CD4-positive, alpha-beta T cell (primary cell): ENCODE measurements at regions of chr14 and their contacts with region 1.

Region 1: DNA sequence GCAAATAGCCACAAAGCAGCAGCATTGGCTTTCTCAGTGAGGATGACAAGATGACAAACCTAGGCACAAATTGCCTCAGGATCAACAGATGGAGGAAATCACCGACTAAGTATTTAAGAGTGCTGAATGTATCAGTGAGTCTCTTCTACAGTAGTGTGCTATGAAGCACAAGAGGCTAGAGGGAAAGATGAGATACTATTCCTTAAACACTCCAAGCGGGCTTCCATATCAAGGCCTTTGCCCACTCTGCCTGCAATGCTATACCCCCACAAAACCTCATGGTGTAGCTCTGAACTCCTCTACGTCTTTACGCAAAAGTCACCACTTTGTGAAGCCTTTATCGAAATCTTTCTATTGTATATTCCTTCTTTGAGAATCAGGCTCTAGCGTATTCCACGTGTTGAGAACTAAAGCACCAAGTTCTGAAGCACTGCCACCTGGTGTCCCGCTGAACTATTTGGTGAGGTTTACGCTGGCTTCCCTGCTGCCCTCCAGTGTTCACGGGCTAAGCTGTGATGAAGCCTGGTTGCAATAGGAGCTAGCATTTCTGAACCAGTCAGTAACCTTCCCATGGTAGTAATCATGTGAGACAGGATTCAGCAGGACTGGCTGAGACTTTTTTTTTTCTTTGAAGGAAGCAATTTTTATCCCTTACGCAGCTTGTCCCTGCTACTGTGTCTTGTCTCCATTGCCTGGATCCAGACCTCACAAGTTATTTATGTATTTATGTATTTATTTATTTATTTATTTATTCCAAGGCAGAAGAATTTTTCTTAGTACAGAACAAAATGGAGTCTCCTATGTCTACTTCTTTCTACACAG is 426.5 kb upstream of the OR4E1 start:
- DNase-seq: peak; percentile 28 to 83 (median 55)
- ATAC-seq: peak; percentile 74
- H3K4me3 ChIP-seq: no peak overlapping the region
- H3K4me3 Mint-ChIP-seq: peak overlapping the region; percentile 54
- H3K27ac ChIP-seq: no peak overlapping the region
- H3K27ac Mint-ChIP-seq: peak overlapping the region; percentile 67
- H3K4me1 ChIP-seq: peaks cover 24% of the 10 kb centered on the region
- H3K4me1 Mint-ChIP-seq: peaks cover 53% of the 10 kb centered on the region
- H3K27me3 ChIP-seq: no peaks in the 10 kb centered on the region
- H3K27me3 Mint-ChIP-seq: no peaks in the 10 kb centered on the region
- CTCF ChIP-seq: peak; percentile 61

Region 2: GRCh38 chr14:21987937-21988336 is 112.2 kb before region 1 on chr14:
- CTCF ChIA-PET with region 1: no interaction called
- POLR2A ChIA-PET with region 1: no interaction called
- intact Hi-C with region 1: no loop called
- DNase-seq: peak in 3 of 14 experiments; percentile 49 to 62 (median 54)
- ATAC-seq: no peak
- H3K4me3 ChIP-seq: no peak overlapping the region
- H3K4me3 Mint-ChIP-seq: peak overlapping the region; percentile 3
- H3K27ac ChIP-seq: no peak overlapping the region
- H3K27ac Mint-ChIP-seq: peak overlapping the region; percentile 75
- H3K4me1 ChIP-seq: peaks cover 6% of the 10 kb centered on the region
- H3K4me1 Mint-ChIP-seq: peaks cover 12% of the 10 kb centered on the region
- H3K27me3 ChIP-seq: no peaks in the 10 kb centered on the region
- H3K27me3 Mint-ChIP-seq: no peaks in the 10 kb centered on the region
- CTCF ChIP-seq: peak; percentile 50

Region 3: GRCh38 chr14:22039938-22040775 is 60.0 kb before region 1 on chr14:
- CTCF ChIA-PET with region 1: interaction called, 13 read pairs
- POLR2A ChIA-PET with region 1: no interaction called
- intact Hi-C with region 1: loop called in 1 of 2 experiments (anchors 2 kb)
- DNase-seq: peak in 13 of 14 experiments; percentile 2 to 71 (median 38)
- ATAC-seq: peak; percentile 95
- H3K4me3 ChIP-seq: peak overlapping the region; percentile 38
- H3K4me3 Mint-ChIP-seq: peak overlapping the region; percentile 86
- H3K27ac ChIP-seq: peak overlapping the region in 1 of 2 donors; percentile 35
- H3K27ac Mint-ChIP-seq: peak overlapping the region; percentile 93
- H3K4me1 ChIP-seq: no peaks in the 10 kb centered on the region
- H3K4me1 Mint-ChIP-seq: peaks cover 22% of the 10 kb centered on the region
- H3K27me3 ChIP-seq: no peaks in the 10 kb centered on the region
- H3K27me3 Mint-ChIP-seq: no peaks in the 10 kb centered on the region
- CTCF ChIP-seq: peak; percentile 59

Region 4: GRCh38 chr14:22047115-22047514 is 53.0 kb before region 1 on chr14:
- CTCF ChIA-PET with region 1: interaction called, 13 read pairs
- POLR2A ChIA-PET with region 1: interaction called, 8 read pairs
- intact Hi-C with region 1: loop called (anchors 2 kb)
- DNase-seq: peak in 8 of 14 experiments; percentile 11 to 76 (median 42)
- ATAC-seq: peak; percentile 93
- H3K4me3 ChIP-seq: no peak overlapping the region
- H3K4me3 Mint-ChIP-seq: peak overlapping the region; percentile 59
- H3K27ac ChIP-seq: no peak overlapping the region
- H3K27ac Mint-ChIP-seq: peak overlapping the region; percentile 81
- H3K4me1 ChIP-seq: peaks cover 3% of the 10 kb centered on the region
- H3K4me1 Mint-ChIP-seq: peaks cover 33% of the 10 kb centered on the region
- H3K27me3 ChIP-seq: no peaks in the 10 kb centered on the region
- H3K27me3 Mint-ChIP-seq: peaks cover 3% of the 10 kb centered on the region
- CTCF ChIP-seq: peak; percentile 47

Region 5: GRCh38 chr14:22065347-22065746 is 34.8 kb before region 1 on chr14:
- CTCF ChIA-PET with region 1: interaction called, 3 read pairs
- POLR2A ChIA-PET with region 1: interaction called, 26 read pairs
- intact Hi-C with region 1: loop called in 1 of 2 experiments (anchors 5 kb)
- DNase-seq: peak in 1 of 14 experiments; percentile 23
- ATAC-seq: peak; percentile 35
- H3K4me3 ChIP-seq: no peak overlapping the region
- H3K4me3 Mint-ChIP-seq: peak overlapping the region; percentile 4
- H3K27ac ChIP-seq: no peak overlapping the region
- H3K27ac Mint-ChIP-seq: peak overlapping the region; percentile 73
- H3K4me1 ChIP-seq: peaks cover 11% of the 10 kb centered on the region
- H3K4me1 Mint-ChIP-seq: peaks cover 38% of the 10 kb centered on the region
- H3K27me3 ChIP-seq: no peaks in the 10 kb centered on the region
- H3K27me3 Mint-ChIP-seq: no peaks in the 10 kb centered on the region
- CTCF ChIP-seq: peak; percentile 18

Region 6: DNA sequence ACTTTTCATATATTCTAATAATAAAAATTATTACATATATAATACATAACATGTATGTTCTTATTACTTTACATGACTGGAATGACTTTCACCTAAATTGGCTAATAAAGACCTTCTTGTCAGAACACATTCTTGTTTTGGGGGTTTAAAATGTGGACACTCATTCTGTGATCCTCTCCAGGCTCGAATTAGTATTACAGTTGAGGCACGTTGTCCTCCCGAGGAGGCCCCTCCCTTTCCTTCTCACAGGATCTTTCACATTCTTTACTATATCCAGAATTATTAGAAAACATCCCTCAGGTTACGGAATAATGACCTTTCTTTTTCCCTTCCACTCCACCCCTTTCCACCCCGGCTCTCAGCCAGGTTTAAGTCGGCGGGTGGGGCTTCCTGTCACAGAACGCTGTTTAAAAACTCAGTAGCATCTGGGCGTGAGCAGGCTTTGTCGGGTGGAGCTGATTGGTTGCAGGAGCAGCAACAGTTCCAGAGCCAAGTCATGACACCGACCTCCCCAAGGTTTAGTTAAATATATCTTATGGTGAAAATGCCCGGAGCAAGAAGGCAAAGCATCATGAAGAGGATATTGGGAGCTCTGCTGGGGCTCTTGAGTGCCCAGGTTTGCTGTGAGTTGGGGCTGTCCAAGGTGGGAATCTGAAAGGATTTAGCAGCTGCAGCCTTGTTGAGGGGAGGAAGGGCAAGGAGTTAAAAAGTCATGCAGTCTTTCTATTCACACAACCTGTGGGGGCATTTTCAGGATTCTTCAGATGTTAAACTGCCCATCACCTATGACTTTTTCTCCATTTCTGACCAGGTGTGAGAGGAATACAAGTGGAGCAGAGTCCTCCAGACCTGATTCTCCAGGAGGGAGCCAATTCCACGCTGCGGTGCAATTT is 29.8 kb before region 1 on chr14:
- CTCF ChIA-PET with region 1: interaction called, 4 read pairs
- POLR2A ChIA-PET with region 1: interaction called, 26 read pairs
- intact Hi-C with region 1: loop called in 1 of 2 experiments (anchors 5 kb)
- DNase-seq: peak in 13 of 14 experiments; percentile 19 to 80 (median 51)
- ATAC-seq: peak; percentile 80
- H3K4me3 ChIP-seq: peak overlapping the region; percentile 63
- H3K4me3 Mint-ChIP-seq: peak overlapping the region; percentile 97
- H3K27ac ChIP-seq: peak overlapping the region in 1 of 2 donors; percentile 48
- H3K27ac Mint-ChIP-seq: peak overlapping the region; percentile 97
- H3K4me1 ChIP-seq: peaks cover 14% of the 10 kb centered on the region
- H3K4me1 Mint-ChIP-seq: peaks cover 60% of the 10 kb centered on the region
- H3K27me3 ChIP-seq: no peaks in the 10 kb centered on the region
- H3K27me3 Mint-ChIP-seq: no peaks in the 10 kb centered on the region
- CTCF ChIP-seq: no peak

Region 7: GRCh38 chr14:22084393-22085281 is 15.5 kb before region 1 on chr14:
- CTCF ChIA-PET with region 1: interaction called, 10 read pairs
- POLR2A ChIA-PET with region 1: interaction called, 13 read pairs
- intact Hi-C with region 1: loop called (anchors 1 to 2 kb)
- DNase-seq: peak in 5 of 14 experiments; percentile 5 to 73 (median 60)
- ATAC-seq: peak; percentile 51
- H3K4me3 ChIP-seq: no peak overlapping the region
- H3K4me3 Mint-ChIP-seq: peak overlapping the region; percentile 23
- H3K27ac ChIP-seq: no peak overlapping the region
- H3K27ac Mint-ChIP-seq: peak overlapping the region; percentile 35
- H3K4me1 ChIP-seq: peaks cover 2% of the 10 kb centered on the region
- H3K4me1 Mint-ChIP-seq: peaks cover 31% of the 10 kb centered on the region
- H3K27me3 ChIP-seq: no peaks in the 10 kb centered on the region
- H3K27me3 Mint-ChIP-seq: no peaks in the 10 kb centered on the region
- CTCF ChIP-seq: peak; percentile 55

Region 8: DNA sequence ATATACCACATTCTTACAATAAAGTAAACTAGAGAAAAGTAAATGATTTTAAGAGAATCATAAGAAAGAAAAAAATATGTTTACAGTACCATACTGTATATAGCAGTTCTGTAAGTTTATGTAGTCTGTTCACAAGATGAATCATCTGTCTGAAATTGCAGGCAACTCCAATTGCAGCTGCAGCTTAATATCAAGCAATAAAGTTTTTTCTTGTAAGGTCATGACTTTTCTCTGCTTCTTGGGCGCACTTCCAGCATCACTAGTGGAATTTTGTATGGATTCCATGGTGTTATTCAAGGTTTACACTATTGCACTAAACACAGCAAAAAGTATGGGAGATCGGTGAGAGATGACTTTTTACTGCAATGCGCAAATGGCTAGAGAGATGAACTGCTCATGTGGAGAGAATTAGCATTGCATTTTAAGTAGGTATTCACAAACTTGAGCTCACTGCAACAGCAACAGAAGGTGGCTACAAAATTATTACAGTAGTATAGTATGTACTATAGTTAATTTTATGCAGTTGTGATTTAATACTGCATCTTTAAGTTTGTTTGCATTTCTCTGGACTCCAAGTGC is 18.8 kb after region 1 on chr14:
- CTCF ChIA-PET with region 1: no interaction called
- POLR2A ChIA-PET with region 1: no interaction called
- intact Hi-C with region 1: no loop called
- DNase-seq: no peak
- ATAC-seq: no peak
- H3K4me3 ChIP-seq: no peak overlapping the region
- H3K4me3 Mint-ChIP-seq: peak overlapping the region; percentile 83
- H3K27ac ChIP-seq: no peak overlapping the region
- H3K27ac Mint-ChIP-seq: peak overlapping the region; percentile 79
- H3K4me1 ChIP-seq: no peaks in the 10 kb centered on the region
- H3K4me1 Mint-ChIP-seq: peaks cover 21% of the 10 kb centered on the region
- H3K27me3 ChIP-seq: no peaks in the 10 kb centered on the region
- H3K27me3 Mint-ChIP-seq: no peaks in the 10 kb centered on the region
- CTCF ChIP-seq: no peak